Vagina (tissue), 2 donors: ENCODE measurements at regions of chr11 and their contacts with region 1.

Region 1: DNA sequence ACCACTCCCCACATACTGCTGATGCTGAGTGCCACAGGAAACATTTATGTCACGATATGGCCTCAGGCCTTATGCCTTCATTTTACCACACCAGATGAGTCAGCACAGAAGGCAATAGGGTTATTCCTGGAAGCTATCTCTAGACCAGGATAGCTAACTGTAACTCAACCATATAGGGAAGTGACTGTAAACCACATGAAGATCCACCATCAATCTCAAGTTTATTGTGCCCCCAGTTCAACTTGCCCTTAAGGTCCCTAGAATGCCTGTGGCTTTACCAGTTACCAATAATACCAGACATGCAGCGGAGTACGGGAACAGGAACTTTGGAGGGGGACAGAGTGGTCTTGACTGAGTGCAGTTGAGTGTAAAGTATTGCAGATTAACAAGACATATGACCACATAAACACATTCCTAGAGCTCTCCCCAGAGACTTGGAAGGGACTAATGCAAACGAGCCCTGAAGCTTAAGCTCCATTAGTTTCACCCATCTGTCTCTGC is 180.9 kb downstream of the KIF18A start:
- DNase-seq: no peak
- H3K4me3 ChIP-seq: no peak overlapping the region
- H3K27ac ChIP-seq: no peak overlapping the region
- H3K4me1 ChIP-seq: no peaks in the 10 kb centered on the region
- H3K27me3 ChIP-seq: no peaks in the 10 kb centered on the region
- CTCF ChIP-seq: no peak
- POLR2A ChIP-seq: no peak

Region 2: GRCh38 chr11:27896096-27896495 is 30.9 kb before region 1 on chr11:
- intact Hi-C with region 1: loop called (anchors 1 kb)
- DNase-seq: no peak
- H3K4me3 ChIP-seq: no peak overlapping the region
- H3K27ac ChIP-seq: no peak overlapping the region
- H3K4me1 ChIP-seq: no peaks in the 10 kb centered on the region
- H3K27me3 ChIP-seq: no peaks in the 10 kb centered on the region
- CTCF ChIP-seq: no peak
- POLR2A ChIP-seq: no peak

Region 3: GRCh38 chr11:28243581-28243980 is 316.6 kb after region 1 on chr11:
- intact Hi-C with region 1: no loop called
- DNase-seq: no peak
- H3K4me3 ChIP-seq: no peak overlapping the region
- H3K27ac ChIP-seq: no peak overlapping the region
- H3K4me1 ChIP-seq: peaks cover 7% of the 10 kb centered on the region
- H3K27me3 ChIP-seq: no peaks in the 10 kb centered on the region
- CTCF ChIP-seq: no peak
- POLR2A ChIP-seq: no peak